ENCODE measurements at regions of chr13 and their contacts with region 1.

Region 1: GRCh38 chr13:102596147-102597028 is at the start of gene TPP2:
- DNase-seq: peak; percentile 98
- H3K4me3 Mint-ChIP-seq: peak within 1 kb of the TSS; percentile 98
- H3K27ac Mint-ChIP-seq: peak within 1 kb of the TSS; percentile 100
- H3K4me1 Mint-ChIP-seq: peaks cover 55% of the 10 kb centered on the region
- H3K27me3 Mint-ChIP-seq: no peaks in the 10 kb centered on the region
- total RNA-seq, gene TPP2: 51.9 to 54.7 TPM

Region 2: GRCh38 chr13:102311901-102312300 is 284.5 kb before region 1 on chr13:
- CTCF ChIA-PET with region 1: no interaction called
- intact Hi-C with region 1: no loop called
- DNase-seq: no peak
- H3K4me3 Mint-ChIP-seq: no peak overlapping the region
- H3K27ac Mint-ChIP-seq: no peak overlapping the region
- H3K4me1 Mint-ChIP-seq: peaks cover 2% of the 10 kb centered on the region
- H3K27me3 Mint-ChIP-seq: peaks cover 18% of the 10 kb centered on the region

Region 3: DNA sequence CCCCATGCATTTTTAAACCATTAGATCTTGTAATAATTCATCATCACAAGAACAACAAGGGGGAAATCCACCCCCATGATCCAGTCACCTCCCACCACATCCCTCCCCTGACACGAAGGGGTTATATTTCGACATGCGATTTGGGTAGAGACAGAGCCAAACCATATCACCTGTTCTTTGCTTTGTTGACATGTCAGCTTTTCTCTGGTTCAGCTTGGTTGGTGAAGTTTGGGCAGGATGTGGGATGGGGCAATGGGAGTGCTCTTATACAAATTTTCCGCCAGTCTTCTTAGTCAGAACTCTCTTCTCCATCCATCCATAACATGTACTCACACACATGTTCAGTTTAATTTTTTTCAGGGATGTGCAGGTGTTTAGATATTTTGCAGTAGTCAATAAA is 13.3 kb after region 1 on chr13:
- CTCF ChIA-PET with region 1: interaction called, 6 read pairs
- intact Hi-C with region 1: loop called (anchors 2 kb)
- DNase-seq: peak; percentile 25
- H3K4me3 Mint-ChIP-seq: no peak overlapping the region
- H3K27ac Mint-ChIP-seq: peak overlapping the region; percentile 65
- H3K4me1 Mint-ChIP-seq: peaks cover 47% of the 10 kb centered on the region
- H3K27me3 Mint-ChIP-seq: no peaks in the 10 kb centered on the region

Region 4: DNA sequence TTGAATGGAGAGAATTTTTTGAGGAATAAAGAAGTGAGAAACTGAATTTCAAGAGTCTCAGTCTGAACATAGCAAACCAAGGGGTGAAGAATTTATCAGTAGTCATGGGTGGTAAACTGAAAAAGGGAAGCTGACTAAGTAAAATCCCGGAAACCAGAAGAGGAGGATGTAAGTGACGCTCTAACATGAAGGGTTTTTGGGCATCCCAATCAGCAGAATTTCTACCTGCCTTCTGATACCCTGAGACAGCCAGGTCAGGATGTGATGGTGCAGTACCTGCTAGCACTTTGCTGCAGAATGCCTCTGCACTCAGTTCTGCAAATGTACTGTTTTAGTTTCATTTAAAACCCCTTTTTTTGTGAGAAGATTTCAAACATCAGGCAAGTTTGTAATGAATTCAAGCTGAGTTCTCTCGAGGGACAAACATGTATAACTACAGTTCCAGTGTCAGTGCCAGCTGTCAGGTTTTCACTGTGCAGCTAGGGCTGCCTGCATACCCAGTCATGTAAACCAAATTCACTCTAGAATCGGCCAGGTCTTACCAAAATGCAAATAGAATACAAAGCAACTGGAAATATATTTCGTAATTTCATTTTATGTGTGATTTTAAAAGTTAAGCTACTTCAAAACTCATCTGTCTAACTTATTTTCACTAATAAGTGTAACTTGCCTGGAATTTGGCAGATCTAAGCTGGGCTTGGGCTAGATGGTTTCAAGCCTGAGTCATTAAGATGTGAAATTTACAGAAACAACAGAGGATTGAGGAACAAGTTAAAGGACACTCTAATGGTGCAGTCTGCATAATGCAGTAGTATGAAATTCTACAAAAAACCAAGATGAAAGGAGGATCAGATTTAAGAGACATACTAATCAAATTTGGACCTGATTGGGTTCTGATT is 84.7 kb after region 1 on chr13:
- CTCF ChIA-PET with region 1: no interaction called
- intact Hi-C with region 1: loop called (anchors 2 kb)
- DNase-seq: peak; percentile 12
- H3K4me3 Mint-ChIP-seq: no peak overlapping the region
- H3K27ac Mint-ChIP-seq: peak overlapping the region; percentile 47
- H3K4me1 Mint-ChIP-seq: peaks cover 25% of the 10 kb centered on the region
- H3K27me3 Mint-ChIP-seq: no peaks in the 10 kb centered on the region

Region 5: GRCh38 chr13:102773441-102774215 is 177.2 kb after region 1 on chr13 and contains the start of gene TEX30:
- CTCF ChIA-PET with region 1: no interaction called
- intact Hi-C with region 1: loop called (anchors 1 kb)
- DNase-seq: peak; percentile 83
- H3K4me3 Mint-ChIP-seq: peak within 1 kb of the TSS; percentile 82
- H3K27ac Mint-ChIP-seq: peak within 1 kb of the TSS; percentile 87
- H3K4me1 Mint-ChIP-seq: peaks cover 34% of the 10 kb centered on the region
- H3K27me3 Mint-ChIP-seq: no peaks in the 10 kb centered on the region
- total RNA-seq, gene TEX30: 20.8 to 23.0 TPM

Region 6: DNA sequence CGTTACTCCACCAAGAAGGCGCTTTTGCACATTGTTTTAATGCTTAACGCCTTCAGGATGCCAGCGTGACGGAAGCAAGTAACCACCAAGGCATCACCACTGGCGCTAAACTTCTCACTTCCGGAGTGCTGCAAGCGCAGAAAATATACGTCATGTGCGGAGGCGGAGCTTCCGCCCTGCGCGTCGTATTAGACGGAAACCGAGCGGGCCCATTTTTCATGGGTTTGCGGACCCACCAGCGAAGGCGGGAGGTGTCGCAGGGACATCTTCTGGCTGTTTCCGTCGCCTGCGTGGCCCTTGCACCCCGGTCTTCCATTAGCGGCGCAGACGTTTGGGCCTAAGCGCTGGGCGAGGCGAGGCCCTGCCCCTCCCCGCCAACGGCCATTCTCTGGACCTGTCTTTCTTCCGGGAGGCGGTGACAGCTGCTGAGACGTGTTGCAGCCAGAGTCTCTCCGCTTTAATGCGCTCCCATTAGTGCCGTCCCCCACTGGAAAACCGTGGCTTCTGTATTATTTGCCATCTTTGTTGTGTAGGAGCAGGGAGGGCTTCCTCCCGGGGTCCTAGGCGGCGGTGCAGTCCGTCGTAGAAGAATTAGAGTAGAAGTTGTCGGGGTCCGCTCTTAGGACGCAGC is 249.4 kb after region 1 on chr13 and contains the start of gene ERCC5:
- CTCF ChIA-PET with region 1: interaction called, 23 read pairs
- intact Hi-C with region 1: loop called (anchors 1 kb)
- DNase-seq: peak; percentile 96
- H3K4me3 Mint-ChIP-seq: peak within 1 kb of the TSS; percentile 92
- H3K27ac Mint-ChIP-seq: peak within 1 kb of the TSS; percentile 96
- H3K4me1 Mint-ChIP-seq: peaks cover 35% of the 10 kb centered on the region
- H3K27me3 Mint-ChIP-seq: no peaks in the 10 kb centered on the region
- total RNA-seq, gene ERCC5: 52.0 to 54.0 TPM

Measured in activated naive CD4-positive, alpha-beta T cell treated with anti-CD3 and anti-CD28 coated beads for 36 hours (primary cell).